ENCODE measurements at regions of chr19 and their contacts with region 1.

Region 1: GRCh38 chr19:49676690-49677231 is 310 bp upstream of the PRMT1 start:
- DNase-seq: peak; percentile 100
- H3K4me3 ChIP-seq: peak overlapping the region; percentile 93
- H3K27me3 ChIP-seq: no peaks in the 10 kb centered on the region
- CTCF ChIP-seq: no peak

Region 2: DNA sequence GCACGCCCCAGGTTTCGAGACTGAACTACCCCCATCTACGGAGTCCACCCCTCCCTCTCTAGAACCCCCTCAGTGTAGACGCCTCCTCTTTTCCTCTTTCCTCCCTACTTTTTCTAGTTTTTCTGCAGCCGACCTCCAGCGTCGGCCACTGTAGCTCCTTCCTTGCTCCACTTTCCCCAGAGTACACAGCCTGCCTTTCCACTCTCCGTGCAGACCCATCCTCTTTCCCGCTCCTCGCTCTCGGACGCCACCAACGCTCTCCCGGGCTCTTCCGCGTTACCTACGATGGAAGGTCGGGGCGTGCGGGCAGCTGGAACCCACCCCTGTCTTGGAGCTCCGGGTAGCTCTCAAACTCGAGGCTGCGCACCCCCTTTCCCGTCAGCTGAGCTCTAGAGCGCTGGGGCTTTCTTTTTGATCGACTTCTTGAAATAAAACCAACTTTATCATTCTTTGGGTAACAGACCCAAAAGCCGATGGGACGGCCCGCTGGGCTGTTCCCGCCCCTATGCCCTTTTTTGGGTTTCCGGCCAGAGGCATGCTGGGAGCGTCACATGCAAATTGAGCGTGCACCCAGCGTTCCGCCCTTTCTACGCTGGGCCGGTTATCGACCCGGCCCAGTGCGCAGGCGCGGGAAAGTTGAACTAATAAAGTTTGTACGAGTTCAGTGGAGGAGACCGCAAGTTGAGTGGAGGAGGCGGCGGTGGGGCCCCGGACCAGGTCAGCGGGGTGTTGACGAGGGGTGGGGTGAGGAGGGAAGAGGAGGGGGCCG is 11.2 kb before region 1 on chr19 and contains the starts of genes BCL2L12 and IRF3:
- CTCF ChIA-PET with region 1: interaction called, 22 read pairs
- POLR2A ChIA-PET with region 1: no interaction called
- DNase-seq: peak; percentile 79
- H3K4me3 ChIP-seq: peak within 1 kb of the TSS; percentile 76
- H3K27me3 ChIP-seq: no peaks in the 10 kb centered on the region
- CTCF ChIP-seq: no peak
- polyA plus RNA-seq, gene BCL2L12: 14.2 and 21.5 TPM in 2 replicates
- polyA plus RNA-seq, gene IRF3: 47.5 and 68.5 TPM in 2 replicates

Region 3: GRCh38 chr19:49690656-49691242 is 14.0 kb after region 1 on chr19 and contains the start of gene CPT1C:
- CTCF ChIA-PET with region 1: interaction called, 41 read pairs
- POLR2A ChIA-PET with region 1: no interaction called
- DNase-seq: no peak
- H3K4me3 ChIP-seq: peak within 1 kb of the TSS; percentile 56
- H3K27me3 ChIP-seq: no peaks in the 10 kb centered on the region
- CTCF ChIP-seq: no peak
- polyA plus RNA-seq, gene CPT1C: 26.0 and 45.9 TPM in 2 replicates

Region 4: DNA sequence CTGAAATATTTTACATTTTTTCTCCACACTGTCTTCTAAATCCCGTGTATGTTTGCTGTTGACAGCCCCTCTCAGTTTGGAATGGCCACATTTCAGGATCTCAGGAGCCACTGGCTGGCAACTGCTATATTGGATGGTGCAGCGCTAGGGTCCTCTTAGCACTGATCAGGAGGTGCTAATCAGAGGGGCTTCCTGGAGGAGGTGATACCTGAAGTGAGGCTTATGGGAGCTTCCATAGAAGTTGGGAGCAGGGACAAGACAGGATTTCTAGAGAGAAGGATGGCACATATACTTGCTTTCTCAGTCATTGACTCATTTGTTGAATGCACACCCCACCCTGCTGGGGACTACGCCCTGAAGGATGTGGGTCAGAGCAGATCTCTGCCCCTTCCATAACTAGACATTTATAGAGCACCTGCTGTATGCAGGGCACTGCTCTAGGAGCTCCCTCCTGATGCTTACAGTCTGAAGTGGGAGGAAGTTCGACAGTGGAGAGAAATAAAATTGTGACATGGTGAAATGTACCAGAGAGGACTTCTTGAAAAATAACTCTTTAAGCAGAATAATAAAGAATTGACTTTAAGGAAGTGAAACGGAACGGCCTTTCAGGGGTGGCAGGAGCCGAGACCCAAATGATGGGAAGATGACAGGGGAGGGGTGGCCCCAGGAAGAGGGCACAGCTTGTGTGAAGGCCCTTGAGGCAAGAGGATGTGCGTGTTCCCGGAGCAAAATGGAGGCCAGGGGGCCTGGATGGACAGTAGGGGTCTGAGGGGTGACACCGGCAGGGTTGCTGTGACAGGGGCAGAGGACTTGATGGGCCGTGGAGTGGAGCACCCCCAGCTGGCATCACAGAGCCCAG is 103.2 kb after region 1 on chr19:
- CTCF ChIA-PET with region 1: no interaction called
- POLR2A ChIA-PET with region 1: no interaction called
- DNase-seq: no peak
- H3K4me3 ChIP-seq: no peak overlapping the region
- H3K27me3 ChIP-seq: no peaks in the 10 kb centered on the region
- CTCF ChIP-seq: no peak

Region 5: GRCh38 chr19:49869441-49870176 is 192.8 kb after region 1 on chr19:
- CTCF ChIA-PET with region 1: no interaction called
- POLR2A ChIA-PET with region 1: interaction called, 10 read pairs
- DNase-seq: peak; percentile 100
- H3K4me3 ChIP-seq: peak overlapping the region; percentile 45
- H3K27me3 ChIP-seq: no peaks in the 10 kb centered on the region
- CTCF ChIP-seq: no peak

Measured in BJ (cell line).